ENCODE measurements at regions of chr2 and their contacts with region 1.

Region 1: DNA sequence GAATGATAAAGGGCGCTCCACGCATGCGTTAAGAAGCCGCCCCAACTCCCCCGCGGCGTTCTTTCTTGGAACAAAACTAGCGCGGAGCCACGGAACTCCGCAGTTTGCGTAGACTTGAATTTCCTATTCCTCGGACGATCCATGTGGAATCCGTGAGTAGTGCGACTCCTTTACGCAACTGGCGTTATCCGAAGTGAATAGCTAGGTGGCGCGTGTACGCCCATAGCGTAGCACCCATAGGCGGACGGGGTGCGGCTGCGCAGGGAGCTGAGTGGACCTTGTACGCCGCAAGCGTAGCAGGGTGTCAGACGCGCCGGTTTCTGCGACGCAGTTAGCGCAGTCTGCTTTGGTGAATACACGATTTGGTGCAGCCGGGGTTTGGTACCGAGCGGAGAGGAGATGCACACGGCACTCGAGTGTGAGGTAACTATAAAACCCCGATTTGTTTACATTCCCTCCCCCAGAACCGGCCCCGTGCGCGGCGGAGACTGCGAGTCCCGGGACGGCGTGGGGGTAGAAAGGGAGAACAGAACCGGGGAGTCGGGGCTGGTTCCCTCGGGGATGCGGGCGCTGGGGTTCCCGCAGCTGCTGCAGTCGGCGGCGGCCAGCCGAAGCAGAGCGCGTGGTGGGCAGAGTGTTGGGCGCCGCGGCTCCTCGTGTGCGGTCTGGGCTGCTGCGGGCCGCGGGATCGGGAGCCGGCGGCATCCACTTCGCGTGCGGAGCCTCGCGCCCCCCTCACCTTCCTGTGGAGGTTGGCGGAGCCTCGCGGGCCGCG is at the start of gene SLC39A10:
- DNase-seq: peak; percentile 100
- H3K4me3 Mint-ChIP-seq: peak within 1 kb of the TSS; percentile 86
- H3K27ac Mint-ChIP-seq: peak within 1 kb of the TSS; percentile 97
- H3K4me1 Mint-ChIP-seq: peaks cover 20% of the 10 kb centered on the region
- H3K27me3 Mint-ChIP-seq: no peaks in the 10 kb centered on the region
- total RNA-seq, gene SLC39A10: 33.4 and 37.1 TPM in 2 replicates

Region 2: GRCh38 chr2:195407782-195408181 is 249.3 kb before region 1 on chr2:
- intact Hi-C with region 1: loop called (anchors 5 kb)
- DNase-seq: no peak
- H3K4me3 Mint-ChIP-seq: no peak overlapping the region
- H3K27ac Mint-ChIP-seq: no peak overlapping the region
- H3K4me1 Mint-ChIP-seq: peaks cover 22% of the 10 kb centered on the region
- H3K27me3 Mint-ChIP-seq: no peaks in the 10 kb centered on the region

Region 3: DNA sequence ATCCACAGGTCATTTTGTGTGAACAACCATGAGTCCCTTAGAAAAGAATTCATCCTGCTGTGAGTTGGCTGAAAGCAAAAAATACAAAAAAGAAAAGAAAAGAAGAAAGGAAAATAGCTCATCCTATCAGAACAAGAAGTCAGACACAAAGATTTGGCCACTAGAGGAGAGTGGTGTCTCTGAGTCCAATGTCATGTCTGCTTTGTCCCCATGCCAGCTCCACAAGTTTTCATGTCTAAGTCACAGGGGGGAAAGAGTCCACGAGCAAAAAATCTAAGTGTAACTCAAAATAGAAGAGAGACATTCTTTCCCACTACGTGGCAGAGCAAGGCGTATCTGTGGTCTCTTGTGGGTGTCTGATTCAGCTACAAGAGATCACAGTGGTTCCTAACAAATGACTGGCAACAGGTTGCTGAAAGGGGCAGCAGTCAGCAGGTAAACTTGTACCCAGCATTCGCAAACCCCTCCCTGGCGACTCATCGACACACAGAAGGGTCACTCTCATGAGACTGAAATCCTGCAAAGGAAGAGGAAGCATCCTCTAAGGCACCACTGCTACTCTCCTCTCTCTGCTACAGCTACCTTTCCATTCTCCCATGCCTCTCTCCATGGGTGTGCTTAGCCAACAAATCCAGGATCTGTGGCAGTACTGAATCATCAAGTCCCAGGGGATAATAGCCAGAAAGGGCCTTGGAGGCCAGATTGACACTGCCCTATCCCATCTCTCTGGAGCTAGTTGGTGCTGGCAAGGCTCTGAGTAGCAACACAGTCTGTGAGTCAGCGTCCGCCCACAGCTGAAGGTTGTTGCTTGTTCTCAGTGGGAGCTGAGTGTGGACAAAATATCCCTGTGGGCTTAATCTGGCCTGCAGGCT is 123.0 kb before region 1 on chr2:
- intact Hi-C with region 1: loop called (anchors 1 kb)
- DNase-seq: peak; percentile 89
- H3K4me3 Mint-ChIP-seq: peak overlapping the region; percentile 87
- H3K27ac Mint-ChIP-seq: peak overlapping the region; percentile 99
- H3K4me1 Mint-ChIP-seq: peaks cover 72% of the 10 kb centered on the region
- H3K27me3 Mint-ChIP-seq: no peaks in the 10 kb centered on the region

Region 4: DNA sequence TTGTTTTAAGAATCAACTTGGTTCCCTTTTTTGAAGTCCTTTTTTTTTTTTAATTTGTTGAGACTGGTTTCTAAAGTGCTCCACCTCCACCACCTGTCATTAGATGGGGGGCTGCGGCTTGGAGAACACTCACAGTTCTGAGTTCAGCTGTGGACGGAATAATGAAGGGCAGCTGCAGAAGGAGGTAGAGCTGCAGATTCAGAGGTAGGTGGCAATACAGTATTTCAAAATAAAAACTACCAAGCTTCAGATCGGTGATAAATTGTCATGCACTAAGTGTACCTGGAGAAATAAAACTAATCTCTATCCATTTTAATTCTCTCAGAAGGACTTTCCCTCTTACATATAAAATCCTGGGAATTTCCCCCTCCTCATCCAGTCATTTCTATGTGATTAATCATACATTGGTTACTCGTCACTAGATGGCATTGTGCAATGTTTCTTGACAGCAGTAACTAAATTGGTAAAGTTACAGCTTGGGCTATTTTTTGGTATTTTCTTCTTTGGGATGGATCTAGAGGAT is 81.1 kb before region 1 on chr2:
- intact Hi-C with region 1: loop called (anchors 1 kb)
- DNase-seq: no peak
- H3K4me3 Mint-ChIP-seq: peak overlapping the region; percentile 37
- H3K27ac Mint-ChIP-seq: peak overlapping the region; percentile 40
- H3K4me1 Mint-ChIP-seq: peaks cover 49% of the 10 kb centered on the region
- H3K27me3 Mint-ChIP-seq: no peaks in the 10 kb centered on the region

Region 5: DNA sequence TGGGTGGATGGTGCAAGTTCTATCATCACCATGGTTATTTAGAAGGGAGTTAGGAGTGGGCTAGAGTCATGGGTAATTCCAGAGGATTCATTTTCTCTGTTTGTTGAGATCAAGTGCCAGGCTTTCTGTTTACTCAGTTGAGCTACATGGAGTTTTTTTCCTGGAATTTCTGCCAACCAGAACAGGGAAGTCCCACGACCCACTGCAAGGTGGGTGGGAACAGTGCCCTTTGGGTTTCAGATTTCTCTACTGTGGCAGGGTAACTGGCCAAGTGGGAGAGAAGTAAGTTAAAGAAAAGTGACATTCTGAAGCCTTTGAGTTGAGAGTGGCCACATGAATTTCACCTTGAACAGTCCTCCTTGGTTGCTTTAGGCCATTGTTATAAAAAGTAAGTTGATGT is 138.8 kb after region 1 on chr2:
- intact Hi-C with region 1: no loop called
- DNase-seq: no peak
- H3K4me3 Mint-ChIP-seq: no peak overlapping the region
- H3K27ac Mint-ChIP-seq: no peak overlapping the region
- H3K4me1 Mint-ChIP-seq: no peaks in the 10 kb centered on the region
- H3K27me3 Mint-ChIP-seq: no peaks in the 10 kb centered on the region

Region 6: DNA sequence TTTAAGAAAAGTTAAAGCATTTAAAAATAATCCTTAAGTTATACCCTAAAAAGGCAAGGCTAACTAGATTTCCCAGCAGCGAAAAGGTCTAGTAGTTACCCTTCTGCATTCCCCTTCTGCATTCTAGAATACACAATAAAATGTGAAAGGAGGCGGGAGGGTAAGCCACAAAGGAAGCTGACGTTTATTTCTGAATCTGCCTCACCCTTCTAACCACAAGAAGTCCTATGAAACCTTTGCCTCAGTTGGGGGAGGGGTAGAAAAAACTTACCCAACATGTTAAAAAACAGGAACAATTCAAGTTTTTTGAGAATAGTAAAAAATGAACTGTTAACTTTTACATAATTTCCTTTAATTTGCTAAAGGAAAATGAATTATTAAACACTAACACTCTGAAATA is 503.1 kb after region 1 on chr2:
- intact Hi-C with region 1: loop called (anchors 2 kb)
- DNase-seq: peak; percentile 93
- H3K4me3 Mint-ChIP-seq: peak overlapping the region; percentile 86
- H3K27ac Mint-ChIP-seq: peak overlapping the region; percentile 88
- H3K4me1 Mint-ChIP-seq: peaks cover 60% of the 10 kb centered on the region
- H3K27me3 Mint-ChIP-seq: no peaks in the 10 kb centered on the region

Region 7: DNA sequence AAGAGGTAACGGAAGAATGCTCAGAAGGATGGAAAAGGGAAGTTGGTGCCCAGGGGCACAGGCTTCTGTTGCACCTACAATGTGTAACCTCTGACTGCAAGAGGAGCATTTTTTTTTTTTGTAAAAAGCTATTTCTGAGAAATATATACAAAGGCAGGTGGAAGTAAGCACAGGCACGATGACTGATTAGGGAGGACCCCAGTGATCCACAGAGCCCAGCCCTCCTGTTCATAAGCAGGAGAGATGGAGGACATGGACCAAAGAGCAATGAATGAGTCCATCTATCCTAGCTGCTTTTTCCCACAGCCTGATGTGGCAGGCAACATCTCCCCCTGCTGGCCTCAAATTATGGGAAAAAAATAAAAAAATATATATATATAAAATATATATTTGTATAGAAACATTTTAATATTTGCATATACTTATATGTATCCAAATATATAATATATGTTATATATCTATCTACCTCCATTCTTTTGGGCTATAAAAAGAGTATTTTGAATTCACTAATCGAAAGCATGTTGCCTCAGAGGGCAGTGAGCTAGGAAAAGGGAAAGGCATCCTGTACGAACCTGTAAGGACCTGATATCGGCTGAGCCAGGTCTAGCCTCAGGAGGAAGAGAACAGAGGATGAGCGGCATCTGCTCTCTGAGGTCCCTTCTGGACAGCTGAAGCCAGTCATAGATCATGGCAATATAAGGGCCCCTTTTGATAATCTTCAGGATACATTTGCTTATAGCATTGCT is 680.3 kb after region 1 on chr2:
- intact Hi-C with region 1: loop called (anchors 10 kb)
- DNase-seq: peak; percentile 68
- H3K4me3 Mint-ChIP-seq: no peak overlapping the region
- H3K27ac Mint-ChIP-seq: no peak overlapping the region
- H3K4me1 Mint-ChIP-seq: peaks cover 3% of the 10 kb centered on the region
- H3K27me3 Mint-ChIP-seq: peaks cover 10% of the 10 kb centered on the region